Prostate gland (tissue), 2 donors: ENCODE measurements at regions of chr13 and their contacts with region 1.

Region 1: DNA sequence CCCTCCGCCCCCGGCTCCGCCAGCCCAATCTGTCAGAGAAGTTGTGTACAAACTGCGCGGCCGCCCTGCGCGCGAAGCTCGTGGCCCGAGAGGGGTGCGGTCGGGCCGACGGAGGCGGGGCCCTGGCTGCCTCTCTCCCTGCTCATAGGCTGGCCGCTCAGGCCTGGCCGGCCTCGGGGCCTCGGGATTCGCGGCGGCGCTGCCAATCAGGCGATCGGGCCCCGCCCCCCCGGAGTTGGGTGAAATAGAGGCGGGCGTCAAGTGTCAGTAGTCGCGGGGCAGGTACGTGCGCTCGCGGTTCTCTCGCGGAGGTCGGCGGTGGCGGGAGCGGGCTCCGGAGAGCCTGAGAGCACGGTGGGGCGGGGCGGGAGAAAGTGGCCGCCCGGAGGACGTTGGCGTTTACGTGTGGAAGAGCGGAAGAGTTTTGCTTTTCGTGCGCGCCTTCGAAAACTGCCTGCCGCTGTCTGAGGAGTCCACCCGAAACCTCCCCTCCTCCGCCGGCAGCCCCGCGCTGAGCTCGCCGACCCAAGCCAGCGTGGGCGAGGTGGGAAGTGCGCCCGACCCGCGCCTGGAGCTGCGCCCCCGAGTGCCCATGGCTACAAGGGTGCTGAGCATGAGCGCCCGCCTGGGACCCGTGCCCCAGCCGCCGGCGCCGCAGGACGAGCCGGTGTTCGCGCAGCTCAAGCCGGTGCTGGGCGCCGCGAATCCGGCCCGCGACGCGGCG is at the start of gene KLF5:
- DNase-seq: peak; percentile 99
- H3K4me3 ChIP-seq: peak within 1 kb of the TSS; percentile 77 to 88
- H3K27ac ChIP-seq: peak within 1 kb of the TSS; percentile 85 to 89
- H3K4me1 ChIP-seq: no peaks in the 10 kb centered on the region
- H3K27me3 ChIP-seq: no peaks in the 10 kb centered on the region
- CTCF ChIP-seq: no peak
- POLR2A ChIP-seq: peak; percentile 100
- total RNA-seq, gene KLF5: 42.3 to 50.6 TPM

Region 2: GRCh38 chr13:72696579-72696978 is 362.3 kb before region 1 on chr13:
- intact Hi-C with region 1: no loop called
- DNase-seq: no peak
- H3K4me3 ChIP-seq: no peak overlapping the region
- H3K27ac ChIP-seq: no peak overlapping the region
- H3K4me1 ChIP-seq: no peaks in the 10 kb centered on the region
- H3K27me3 ChIP-seq: no peaks in the 10 kb centered on the region
- CTCF ChIP-seq: peak in 2 of 4 experiments; percentile 18 to 33
- POLR2A ChIP-seq: no peak

Region 3: DNA sequence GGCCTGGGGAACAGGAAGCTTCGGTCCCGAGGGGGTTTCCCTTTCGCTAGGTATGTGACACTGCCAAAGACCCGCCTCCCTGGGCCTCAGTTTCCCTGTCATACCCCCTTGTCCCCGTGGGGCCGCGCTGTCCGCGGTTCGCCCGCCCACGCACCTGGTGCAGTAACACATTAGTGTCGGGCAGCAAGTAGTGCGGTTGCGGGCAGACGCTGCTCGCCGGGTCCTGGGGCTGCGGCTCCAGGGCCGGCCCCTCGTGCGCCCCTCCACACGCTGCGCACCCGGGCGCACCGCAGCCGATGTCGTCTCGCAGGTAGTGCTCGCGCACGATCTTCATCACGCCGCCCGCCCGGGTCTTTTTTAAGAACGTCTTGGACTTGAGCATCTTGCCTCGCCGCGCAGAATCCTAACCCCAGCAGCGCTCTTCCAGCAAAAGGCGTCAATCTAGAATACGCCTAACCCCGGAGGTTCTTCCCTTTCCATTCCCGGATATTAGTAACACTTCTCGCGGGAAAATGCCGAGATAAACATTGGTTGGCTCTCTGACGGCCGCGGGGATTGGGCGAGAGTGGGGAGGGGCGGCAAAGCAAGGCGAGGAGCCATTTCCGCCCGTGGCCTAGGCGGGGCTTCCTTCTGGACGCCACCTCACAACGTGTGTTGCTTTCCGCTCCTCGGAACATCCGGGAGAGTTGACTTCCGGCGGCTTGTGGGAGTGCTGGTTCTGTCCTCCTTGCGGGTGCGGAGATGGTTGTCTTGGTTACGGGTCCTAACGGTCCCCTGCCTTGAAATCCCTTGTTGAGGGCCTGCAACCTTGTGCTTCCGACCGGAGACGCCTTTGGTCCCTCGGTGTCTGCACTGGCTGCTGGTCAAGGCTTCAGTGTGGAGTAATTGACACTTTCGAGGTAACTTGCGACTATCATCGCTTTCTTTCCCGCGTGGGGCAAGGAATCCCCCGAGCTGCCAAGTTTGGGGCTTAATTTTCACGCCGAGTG is 277.2 kb before region 1 on chr13 and contains the starts of genes DIS3 and PIBF1:
- intact Hi-C with region 1: loop called (anchors 5 kb)
- DNase-seq: peak; percentile 97
- H3K4me3 ChIP-seq: peak within 1 kb of the TSS; percentile 83 to 90
- H3K27ac ChIP-seq: peak within 1 kb of the TSS; percentile 68 to 75
- H3K4me1 ChIP-seq: peaks cover 3% of the 10 kb centered on the region
- H3K27me3 ChIP-seq: no peaks in the 10 kb centered on the region
- CTCF ChIP-seq: no peak
- POLR2A ChIP-seq: peak; percentile 76
- total RNA-seq, gene DIS3: 21.1 to 29.5 TPM
- total RNA-seq, gene PIBF1: 19.9 to 24.9 TPM

Region 4: GRCh38 chr13:72820156-72820897 is 238.6 kb before region 1 on chr13:
- intact Hi-C with region 1: loop called (anchors 10 kb)
- DNase-seq: no peak
- H3K4me3 ChIP-seq: no peak overlapping the region
- H3K27ac ChIP-seq: no peak overlapping the region
- H3K4me1 ChIP-seq: no peaks in the 10 kb centered on the region
- H3K27me3 ChIP-seq: no peaks in the 10 kb centered on the region
- CTCF ChIP-seq: no peak
- POLR2A ChIP-seq: no peak

Region 5: DNA sequence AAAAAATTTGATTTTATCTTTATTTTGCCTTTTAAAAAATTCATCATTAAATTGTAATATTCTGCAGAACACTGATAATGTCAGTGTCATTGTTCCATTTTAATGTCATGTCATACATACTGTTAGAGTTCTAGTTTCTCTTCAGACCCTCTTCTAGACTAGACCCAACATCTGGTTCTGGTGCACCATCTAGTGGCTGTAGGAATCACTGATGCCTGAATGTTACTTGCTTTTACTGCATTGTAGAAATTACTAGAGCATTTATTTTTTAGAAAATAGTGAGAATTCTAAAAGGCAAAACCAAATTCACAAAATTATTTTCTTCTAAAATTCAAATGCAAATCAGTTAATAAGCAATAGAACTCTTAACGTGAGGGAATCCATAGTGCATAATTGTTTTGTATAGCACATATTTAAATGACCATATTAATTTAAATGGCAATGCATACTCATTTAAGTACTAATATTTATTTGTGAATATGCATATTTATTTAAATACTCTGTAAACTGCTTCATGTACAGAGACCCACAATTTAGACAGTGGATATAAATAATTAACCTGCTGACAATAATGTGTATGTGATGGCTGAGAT is 649.6 kb after region 1 on chr13:
- intact Hi-C with region 1: loop called (anchors 2 kb)
- DNase-seq: peak; percentile 44
- H3K4me3 ChIP-seq: no peak overlapping the region
- H3K27ac ChIP-seq: no peak overlapping the region
- H3K4me1 ChIP-seq: no peaks in the 10 kb centered on the region
- H3K27me3 ChIP-seq: no peaks in the 10 kb centered on the region
- CTCF ChIP-seq: peak; percentile 39 to 92 (median 76)
- POLR2A ChIP-seq: no peak